ENCODE measurements at regions of chr9 and their contacts with region 1.

Region 1: DNA sequence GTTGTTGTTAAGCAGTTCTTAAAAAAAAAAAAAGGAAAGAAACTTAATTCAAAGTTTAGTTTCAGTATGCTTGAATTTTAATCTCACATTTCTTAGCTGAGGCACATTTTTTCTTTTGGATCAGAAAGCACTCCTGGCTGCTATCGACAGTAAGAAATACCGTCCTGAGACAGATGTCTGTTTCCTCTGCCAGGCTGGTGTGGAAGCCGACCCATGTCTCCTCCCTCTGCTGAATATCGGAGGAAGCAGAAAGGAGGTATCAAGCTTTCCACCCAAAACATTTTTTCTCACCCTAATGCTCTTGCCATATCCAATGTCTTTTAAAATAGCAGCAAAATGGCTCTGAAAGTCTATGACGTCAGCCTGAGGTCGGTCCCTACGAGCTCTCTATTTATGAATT is 208.1 kb downstream of the TLE4 start:
- DNase-seq: no peak
- ATAC-seq: no peak
- H3K4me3 ChIP-seq: no peak overlapping the region
- H3K27ac ChIP-seq: no peak overlapping the region
- H3K4me1 ChIP-seq: no peaks in the 10 kb centered on the region
- H3K27me3 ChIP-seq: no peaks in the 10 kb centered on the region
- CTCF ChIP-seq: no peak

Region 2: DNA sequence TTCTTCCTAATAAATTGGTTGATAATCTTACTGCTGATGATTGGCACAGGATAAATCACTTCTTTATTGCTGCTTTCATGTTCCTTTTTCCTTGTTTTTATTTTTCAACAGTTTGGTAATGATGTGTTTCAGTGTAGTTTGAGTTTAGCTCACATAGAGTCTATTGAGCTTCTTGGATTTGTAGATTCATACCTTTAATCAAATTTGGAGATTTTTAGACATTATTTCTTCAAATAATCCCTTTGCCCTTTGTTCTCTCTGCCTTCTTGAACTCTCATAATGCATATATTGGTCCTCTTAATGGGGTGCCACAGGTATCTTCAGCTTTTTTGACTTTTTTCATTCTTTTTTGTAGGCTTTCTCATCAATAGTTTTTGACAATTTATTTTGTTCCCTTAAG is 67.2 kb after region 1 on chr9:
- intact Hi-C with region 1: loop called in 1 of 10 experiments (anchors 10 kb)
- DNase-seq: no peak
- ATAC-seq: no peak
- H3K4me3 ChIP-seq: no peak overlapping the region
- H3K27ac ChIP-seq: no peak overlapping the region
- H3K4me1 ChIP-seq: no peaks in the 10 kb centered on the region
- H3K27me3 ChIP-seq: peaks cover 0 to 2% (median 0%) of the 10 kb centered on the region in 7 donors
- CTCF ChIP-seq: no peak

Measured in heart right ventricle (tissue), 16 donors.